Activated CD4-positive, alpha-beta memory T cell treated with anti-CD3 and anti-CD28 coated beads for 36 hours (primary cell): ENCODE measurements at regions of chr17 and their contacts with region 1.

Region 1: GRCh38 chr17:44400226-44400847 is 10.9 kb upstream of the ITGA2B start:
- DNase-seq: no peak
- H3K4me3 Mint-ChIP-seq: no peak overlapping the region
- H3K27ac Mint-ChIP-seq: no peak overlapping the region
- H3K4me1 Mint-ChIP-seq: peaks cover 8% of the 10 kb centered on the region
- H3K27me3 Mint-ChIP-seq: no peaks in the 10 kb centered on the region

Region 2: DNA sequence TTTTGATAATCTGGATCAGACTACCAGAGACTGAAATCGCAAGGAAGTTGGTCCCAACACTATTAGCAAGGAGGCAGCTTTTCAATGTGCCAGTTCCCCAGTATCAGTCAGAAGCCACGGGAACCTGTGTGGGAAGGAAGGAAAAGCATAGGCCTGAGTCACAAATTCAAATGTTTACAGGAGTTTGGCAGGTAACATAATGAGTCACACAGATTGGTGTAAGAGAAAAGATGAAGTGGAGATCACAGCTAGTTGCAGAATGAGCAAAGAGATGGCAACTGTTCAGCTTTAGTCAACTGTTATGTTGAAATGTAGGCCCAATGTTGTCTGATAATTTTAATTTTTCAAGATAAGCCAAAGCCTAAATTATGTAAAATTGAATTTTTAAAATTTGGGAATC is 17.2 kb after region 1 on chr17:
- CTCF ChIA-PET with region 1: no interaction called
- POLR2A ChIA-PET with region 1: no interaction called
- intact Hi-C with region 1: loop called (anchors 2 kb)
- DNase-seq: peak; percentile 52
- H3K4me3 Mint-ChIP-seq: no peak overlapping the region
- H3K27ac Mint-ChIP-seq: peak overlapping the region; percentile 54
- H3K4me1 Mint-ChIP-seq: peaks cover 16% of the 10 kb centered on the region
- H3K27me3 Mint-ChIP-seq: no peaks in the 10 kb centered on the region

Region 3: GRCh38 chr17:44444735-44445105 is 44.4 kb after region 1 on chr17:
- CTCF ChIA-PET with region 1: interaction called, 4 read pairs
- POLR2A ChIA-PET with region 1: no interaction called
- intact Hi-C with region 1: loop called (anchors 5 kb)
- DNase-seq: no peak
- H3K4me3 Mint-ChIP-seq: no peak overlapping the region
- H3K27ac Mint-ChIP-seq: no peak overlapping the region
- H3K4me1 Mint-ChIP-seq: peaks cover 10% of the 10 kb centered on the region
- H3K27me3 Mint-ChIP-seq: no peaks in the 10 kb centered on the region

Region 4: DNA sequence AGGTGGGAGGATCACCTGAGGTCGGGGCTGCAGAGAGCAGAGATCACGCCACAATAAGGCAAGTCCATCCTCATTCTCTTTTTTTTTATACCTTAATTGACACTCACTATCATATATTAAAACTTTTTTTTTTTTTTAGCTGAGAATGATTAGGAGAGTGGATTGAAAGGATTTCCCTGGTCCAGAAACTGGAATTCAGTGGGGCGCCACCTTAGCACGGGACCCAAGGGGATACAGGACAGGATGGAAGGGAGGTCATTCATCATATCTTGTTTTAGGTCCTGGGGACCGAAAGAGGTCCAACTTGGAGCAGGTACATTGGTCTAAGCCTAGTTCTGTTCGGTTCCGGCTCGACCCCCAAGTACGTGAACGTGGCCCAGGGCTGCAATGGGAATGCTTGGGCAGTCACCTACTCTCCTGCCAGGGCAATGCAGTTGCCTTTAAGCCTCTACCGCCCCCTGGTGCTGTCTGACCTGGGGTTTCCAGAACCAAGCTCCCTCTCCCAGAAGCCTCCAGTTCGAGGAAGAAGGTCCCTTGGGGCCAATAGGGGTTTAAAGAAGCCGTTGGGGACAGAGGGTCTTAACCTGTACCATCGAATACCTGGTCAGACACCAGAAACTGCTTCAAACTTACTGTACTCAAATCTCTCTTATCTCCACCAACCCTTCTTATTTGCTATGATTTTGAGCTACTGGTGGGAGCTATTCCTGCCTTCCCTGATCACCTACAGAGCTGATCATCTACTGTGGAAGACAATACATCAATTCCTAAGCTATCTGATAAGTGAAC is 122.7 kb after region 1 on chr17:
- CTCF ChIA-PET with region 1: interaction called, 14 read pairs
- POLR2A ChIA-PET with region 1: no interaction called
- intact Hi-C with region 1: loop called (anchors 2 kb)
- DNase-seq: peak; percentile 82
- H3K4me3 Mint-ChIP-seq: no peak overlapping the region
- H3K27ac Mint-ChIP-seq: no peak overlapping the region
- H3K4me1 Mint-ChIP-seq: no peaks in the 10 kb centered on the region
- H3K27me3 Mint-ChIP-seq: peaks cover 12% of the 10 kb centered on the region

Region 5: DNA sequence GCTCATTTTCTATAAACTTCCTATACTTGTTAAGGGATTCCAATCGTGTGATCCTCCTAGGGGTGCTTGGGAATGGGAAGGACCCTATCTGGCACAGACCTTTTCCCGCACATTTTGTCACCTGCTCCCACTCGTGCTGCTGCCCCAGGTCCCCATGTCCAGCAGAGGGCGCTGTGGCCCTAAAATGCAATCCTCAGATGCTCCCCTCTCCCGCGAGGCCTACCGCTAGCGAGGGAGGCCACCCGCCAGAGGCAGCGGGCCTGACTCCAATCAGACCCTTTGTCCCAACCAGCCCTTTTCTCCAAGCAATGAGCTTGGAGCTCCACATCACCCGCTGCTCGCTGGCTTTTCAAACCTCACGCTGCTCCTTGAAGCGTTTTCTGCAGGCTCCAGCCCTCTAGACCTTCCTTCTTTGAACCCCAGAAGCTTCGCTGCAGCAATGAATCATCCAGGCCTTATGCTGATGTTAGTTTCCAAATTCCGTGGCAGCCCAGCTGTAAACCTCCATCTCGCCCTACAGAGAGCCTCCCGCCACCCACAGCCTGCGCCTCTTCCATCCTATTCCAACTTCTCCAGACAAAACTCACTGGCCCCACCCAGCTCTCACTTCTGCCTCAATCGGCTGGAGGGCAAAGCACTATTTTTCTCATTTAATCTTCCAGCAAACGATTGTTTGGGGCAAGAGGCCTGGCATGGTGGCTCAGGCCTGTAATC is 133.4 kb after region 1 on chr17:
- CTCF ChIA-PET with region 1: no interaction called
- POLR2A ChIA-PET with region 1: no interaction called
- intact Hi-C with region 1: no loop called
- DNase-seq: peak; percentile 91
- H3K4me3 Mint-ChIP-seq: peak overlapping the region; percentile 6
- H3K27ac Mint-ChIP-seq: no peak overlapping the region
- H3K4me1 Mint-ChIP-seq: peaks cover 8% of the 10 kb centered on the region
- H3K27me3 Mint-ChIP-seq: peaks cover 3% of the 10 kb centered on the region

Region 6: GRCh38 chr17:44565866-44566443 is 165.6 kb after region 1 on chr17:
- CTCF ChIA-PET with region 1: no interaction called
- POLR2A ChIA-PET with region 1: no interaction called
- intact Hi-C with region 1: no loop called
- DNase-seq: peak; percentile 23
- H3K4me3 Mint-ChIP-seq: no peak overlapping the region
- H3K27ac Mint-ChIP-seq: no peak overlapping the region
- H3K4me1 Mint-ChIP-seq: no peaks in the 10 kb centered on the region
- H3K27me3 Mint-ChIP-seq: peaks cover 21% of the 10 kb centered on the region

Region 7: GRCh38 chr17:45038728-45039634 is 638.6 kb after region 1 on chr17:
- CTCF ChIA-PET with region 1: no interaction called
- POLR2A ChIA-PET with region 1: no interaction called
- intact Hi-C with region 1: no loop called
- DNase-seq: no peak
- H3K4me3 Mint-ChIP-seq: no peak overlapping the region
- H3K27ac Mint-ChIP-seq: no peak overlapping the region
- H3K4me1 Mint-ChIP-seq: peaks cover 19% of the 10 kb centered on the region
- H3K27me3 Mint-ChIP-seq: no peaks in the 10 kb centered on the region

Region 8: GRCh38 chr17:45060797-45061605 is 660.7 kb after region 1 on chr17 and contains the start of gene NMT1:
- CTCF ChIA-PET with region 1: no interaction called
- POLR2A ChIA-PET with region 1: no interaction called
- intact Hi-C with region 1: no loop called
- DNase-seq: peak; percentile 98
- H3K4me3 Mint-ChIP-seq: peak within 1 kb of the TSS; percentile 100
- H3K27ac Mint-ChIP-seq: peak within 1 kb of the TSS; percentile 100
- H3K4me1 Mint-ChIP-seq: peaks cover 48% of the 10 kb centered on the region
- H3K27me3 Mint-ChIP-seq: no peaks in the 10 kb centered on the region
- total RNA-seq, gene NMT1: 158 TPM